Dendritic cell treated with granulocyte-macrophage colony-stimulating factor and Interleukin-4, amounts not matched to agents 40 ng/mL and 50 ng/mL, for 4 days (primary cell): ENCODE measurements at regions of chr15 and their contacts with region 1.

Region 1: GRCh38 chr15:38707802-38708671 is 143.4 kb upstream of the RASGRP1 start:
- H3K4me3 Mint-ChIP-seq: no peak overlapping the region
- H3K27ac Mint-ChIP-seq: no peak overlapping the region
- H3K4me1 Mint-ChIP-seq: no peaks in the 10 kb centered on the region
- H3K27me3 Mint-ChIP-seq: no peaks in the 10 kb centered on the region

Region 2: DNA sequence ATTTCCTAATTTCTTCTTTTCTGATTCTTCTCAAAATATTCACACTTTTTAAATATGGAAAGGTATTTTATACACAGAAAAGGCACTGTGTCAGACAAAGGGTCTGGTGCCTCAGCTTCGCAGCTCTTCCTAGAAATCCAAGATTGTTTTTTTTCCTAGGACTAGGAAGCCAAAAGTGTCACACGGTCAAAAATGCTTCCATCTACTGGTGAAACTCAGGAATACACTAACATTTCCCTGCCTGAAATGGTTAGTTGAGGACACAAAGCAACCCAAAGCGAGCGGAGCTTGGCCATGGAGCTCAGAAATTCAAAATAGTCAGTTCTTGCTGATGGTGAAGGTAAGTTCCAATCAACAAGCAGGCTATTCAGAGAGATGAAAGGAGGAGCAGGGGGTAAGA is 283.1 kb after region 1 on chr15:
- intact Hi-C with region 1: loop called (anchors 5 kb)
- H3K4me3 Mint-ChIP-seq: no peak overlapping the region
- H3K27ac Mint-ChIP-seq: no peak overlapping the region
- H3K4me1 Mint-ChIP-seq: no peaks in the 10 kb centered on the region
- H3K27me3 Mint-ChIP-seq: peaks cover 1% of the 10 kb centered on the region